Activated CD4-positive, alpha-beta T cell treated with anti-CD3 and anti-CD28 coated beads, Interleukin-2, amount 10 ng/mL, durations not matched to agents 24 days and 14 days (primary cell): ENCODE measurements at regions of chr11 and their contacts with region 1.

Region 1: GRCh38 chr11:102287964-102288724 is 29.1 kb upstream of the BIRC3 start:
- DNase-seq: peak; percentile 84
- H3K4me3 Mint-ChIP-seq: peak overlapping the region; percentile 41
- H3K27ac Mint-ChIP-seq: peak overlapping the region; percentile 21
- H3K4me1 Mint-ChIP-seq: peaks cover 31% of the 10 kb centered on the region
- H3K27me3 Mint-ChIP-seq: no peaks in the 10 kb centered on the region

Region 2: DNA sequence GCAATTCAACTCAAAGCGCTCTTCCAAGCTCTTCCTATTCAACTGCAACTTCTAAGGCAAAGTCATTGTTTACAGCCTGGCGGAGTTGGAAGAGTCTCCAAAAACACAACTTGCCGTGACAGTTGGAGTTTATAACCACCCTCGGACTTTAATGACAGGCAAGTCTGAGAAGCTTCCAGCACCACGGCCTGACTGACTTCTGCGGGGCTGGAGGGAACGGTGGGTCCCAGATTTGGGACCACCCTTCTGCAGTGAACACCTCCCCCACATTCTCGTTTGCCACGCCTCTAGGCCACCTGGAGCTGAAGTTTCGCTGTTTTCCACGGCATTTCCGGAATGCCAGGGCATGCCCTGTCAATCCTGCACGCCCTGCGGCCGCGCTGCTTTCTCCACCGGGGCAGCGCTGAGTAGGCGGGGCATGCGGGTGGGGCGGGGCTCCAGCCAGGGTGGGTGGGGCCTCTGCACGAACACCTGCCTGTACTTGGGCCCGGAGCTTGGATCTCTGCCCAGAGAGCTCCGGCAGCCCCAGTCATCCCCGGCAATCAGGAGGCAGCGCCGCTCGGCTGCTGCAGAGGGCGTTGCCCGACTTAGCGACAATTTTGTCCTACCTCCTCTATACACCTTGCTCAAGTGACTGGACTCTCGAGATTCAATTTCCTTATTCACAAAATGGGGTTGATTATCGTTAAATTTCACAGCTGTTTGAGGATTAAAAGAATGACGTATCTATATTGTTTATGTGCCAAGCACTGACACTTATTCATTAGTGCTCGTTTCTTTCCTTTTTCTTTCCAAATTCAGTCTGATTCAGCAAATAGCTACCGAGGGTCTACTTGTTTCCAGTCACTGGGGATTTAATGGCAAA is 19.6 kb before region 1 on chr11:
- intact Hi-C with region 1: no loop called
- DNase-seq: peak; percentile 88
- H3K4me3 Mint-ChIP-seq: peak overlapping the region; percentile 78
- H3K27ac Mint-ChIP-seq: no peak overlapping the region
- H3K4me1 Mint-ChIP-seq: peaks cover 25% of the 10 kb centered on the region
- H3K27me3 Mint-ChIP-seq: peaks cover 46% of the 10 kb centered on the region

Region 3: DNA sequence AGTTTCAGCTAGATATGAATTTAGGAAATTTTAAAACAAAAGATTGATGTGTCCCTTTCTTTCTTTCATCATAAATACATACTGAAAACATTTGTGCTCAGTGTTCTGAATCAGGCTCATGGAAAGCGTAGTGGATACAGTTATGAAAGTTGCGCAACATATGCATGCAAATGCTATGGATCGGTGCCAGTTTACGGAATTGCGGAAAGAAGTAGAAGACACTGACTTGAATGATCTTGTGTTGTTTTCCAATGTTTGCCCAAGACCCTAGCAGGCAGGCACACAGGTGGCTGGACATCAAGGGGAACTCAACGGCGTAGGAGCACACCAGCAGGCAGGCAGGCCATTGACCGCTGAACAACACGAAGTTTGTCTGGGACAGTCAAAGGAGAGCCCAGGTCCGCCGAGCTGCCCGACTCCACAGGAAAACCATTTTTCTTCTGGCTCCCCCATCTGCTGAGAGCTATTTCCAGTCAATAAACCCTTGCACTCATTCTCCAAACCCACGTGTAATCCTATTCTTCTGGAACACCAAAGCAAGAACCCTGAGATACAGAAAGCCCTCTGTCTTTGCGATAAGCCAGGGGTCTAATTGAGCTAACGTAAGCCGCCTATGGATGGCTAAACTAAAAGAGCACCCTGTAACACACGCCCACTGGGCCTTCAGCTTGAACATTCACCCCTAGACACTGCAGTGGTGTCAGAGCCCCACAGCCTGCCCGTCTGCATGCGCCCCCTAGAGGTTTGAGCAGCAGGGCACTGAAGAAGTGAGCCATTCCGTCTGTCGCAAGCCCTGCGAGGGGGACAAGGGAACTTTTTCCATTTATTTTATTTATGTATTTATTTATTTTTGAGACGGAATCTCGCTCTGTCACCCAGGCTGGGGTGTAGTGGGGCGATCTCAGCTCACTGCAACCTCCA is 21.7 kb after region 1 on chr11:
- intact Hi-C with region 1: no loop called
- DNase-seq: no peak
- H3K4me3 Mint-ChIP-seq: no peak overlapping the region
- H3K27ac Mint-ChIP-seq: no peak overlapping the region
- H3K4me1 Mint-ChIP-seq: peaks cover 46% of the 10 kb centered on the region
- H3K27me3 Mint-ChIP-seq: no peaks in the 10 kb centered on the region

Region 4: DNA sequence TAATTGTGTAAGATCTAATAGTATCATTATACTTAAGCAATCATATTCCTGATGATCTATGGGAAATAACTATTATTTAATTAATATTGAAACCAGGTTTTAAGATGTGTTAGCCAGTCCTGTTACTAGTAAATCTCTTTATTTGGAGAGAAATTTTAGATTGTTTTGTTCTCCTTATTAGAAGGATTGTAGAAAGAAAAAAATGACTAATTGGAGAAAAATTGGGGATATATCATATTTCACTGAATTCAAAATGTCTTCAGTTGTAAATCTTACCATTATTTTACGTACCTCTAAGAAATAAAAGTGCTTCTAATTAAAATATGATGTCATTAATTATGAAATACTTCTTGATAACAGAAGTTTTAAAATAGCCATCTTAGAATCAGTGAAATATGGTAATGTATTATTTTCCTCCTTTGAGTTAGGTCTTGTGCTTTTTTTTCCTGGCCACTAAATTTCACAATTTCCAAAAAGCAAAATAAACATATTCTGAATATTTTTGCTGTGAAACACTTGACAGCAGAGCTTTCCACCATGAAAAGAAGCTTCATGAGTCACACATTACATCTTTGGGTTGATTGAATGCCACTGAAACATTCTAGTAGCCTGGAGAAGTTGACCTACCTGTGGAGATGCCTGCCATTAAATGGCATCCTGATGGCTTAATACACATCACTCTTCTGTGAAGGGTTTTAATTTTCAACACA is 35.6 kb after region 1 on chr11:
- intact Hi-C with region 1: loop called (anchors 1 kb)
- DNase-seq: no peak
- H3K4me3 Mint-ChIP-seq: no peak overlapping the region
- H3K27ac Mint-ChIP-seq: no peak overlapping the region
- H3K4me1 Mint-ChIP-seq: peaks cover 47% of the 10 kb centered on the region
- H3K27me3 Mint-ChIP-seq: no peaks in the 10 kb centered on the region

Region 5: GRCh38 chr11:102346748-102347461 is 58.8 kb after region 1 on chr11 and contains the start of gene BIRC2:
- intact Hi-C with region 1: loop called (anchors 1 kb)
- DNase-seq: peak; percentile 99
- H3K4me3 Mint-ChIP-seq: peak within 1 kb of the TSS; percentile 99
- H3K27ac Mint-ChIP-seq: peak within 1 kb of the TSS; percentile 99
- H3K4me1 Mint-ChIP-seq: peaks cover 36% of the 10 kb centered on the region
- H3K27me3 Mint-ChIP-seq: no peaks in the 10 kb centered on the region
- total RNA-seq, gene BIRC2: 27.8 and 30.8 TPM in 2 replicates

Region 6: DNA sequence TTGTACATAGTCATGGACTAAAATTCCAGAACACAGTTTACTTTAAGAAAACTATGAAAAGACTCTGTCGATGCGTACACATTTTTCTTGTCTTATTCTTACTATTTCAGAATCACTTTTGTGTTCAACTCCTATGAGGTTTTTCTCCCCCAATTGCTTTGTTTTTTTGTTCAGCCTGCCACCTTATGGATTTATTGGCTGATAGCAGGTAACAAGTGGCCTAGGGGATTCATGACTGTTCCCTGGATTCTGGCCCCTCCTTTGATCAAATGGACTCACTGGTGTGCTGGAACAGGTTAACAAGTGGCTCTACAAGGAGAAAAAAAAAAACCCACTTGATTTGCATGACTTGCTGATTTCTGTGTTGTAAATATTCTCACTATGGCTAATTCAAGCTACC is 326.3 kb after region 1 on chr11:
- intact Hi-C with region 1: loop called (anchors 5 kb)
- DNase-seq: no peak
- H3K4me3 Mint-ChIP-seq: no peak overlapping the region
- H3K27ac Mint-ChIP-seq: no peak overlapping the region
- H3K4me1 Mint-ChIP-seq: peaks cover 15% of the 10 kb centered on the region
- H3K27me3 Mint-ChIP-seq: peaks cover 17% of the 10 kb centered on the region